Activated CD4-positive, alpha-beta T cell treated with anti-CD3 and anti-CD28 coated beads for 36 hours (primary cell): ENCODE measurements at regions of chr12 and their contacts with region 1.

Region 1: DNA sequence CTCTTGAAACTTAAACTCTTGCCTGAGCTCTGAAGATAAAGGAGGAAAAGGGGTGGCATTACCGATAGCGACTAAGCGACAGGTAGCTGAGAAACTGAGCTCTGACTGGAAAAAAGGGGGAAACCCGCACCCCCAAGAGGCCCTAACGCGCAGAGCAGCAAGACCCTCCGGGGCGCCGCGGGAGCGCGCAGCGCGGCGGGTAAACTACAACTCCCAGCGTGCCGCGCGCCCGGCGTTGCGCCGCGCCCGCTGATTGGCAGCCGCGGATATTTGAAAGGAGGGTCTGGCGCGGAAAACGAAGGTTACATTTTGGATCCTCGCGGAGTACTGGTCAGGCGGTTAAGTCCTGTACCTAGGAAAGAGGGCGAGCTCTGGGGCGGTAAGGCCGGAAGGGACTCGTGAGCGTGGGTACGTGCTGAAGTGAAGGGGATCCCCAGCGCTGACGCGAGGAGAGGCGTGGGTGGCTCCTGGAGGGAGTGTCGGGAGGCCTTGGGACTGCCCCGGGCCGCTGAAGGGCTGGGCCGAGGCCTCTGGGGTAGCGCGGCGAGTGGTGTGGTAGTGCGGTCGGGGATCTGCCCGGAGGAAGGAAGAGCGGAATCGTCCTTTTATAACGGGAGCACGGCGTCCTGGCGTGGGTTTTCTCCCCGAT is at the start of gene ESPL1:
- DNase-seq: peak; percentile 93
- ATAC-seq: peak; percentile 86
- H3K4me3 Mint-ChIP-seq: peak within 1 kb of the TSS; percentile 92
- H3K27ac Mint-ChIP-seq: peak within 1 kb of the TSS; percentile 98
- H3K4me1 Mint-ChIP-seq: peaks cover 30% of the 10 kb centered on the region
- H3K27me3 Mint-ChIP-seq: no peaks in the 10 kb centered on the region
- total RNA-seq, gene ESPL1: 60.8 to 66.9 TPM

Region 2: GRCh38 chr12:53014709-53015108 is 253.4 kb before region 1 on chr12:
- CTCF ChIA-PET with region 1: no interaction called
- POLR2A ChIA-PET with region 1: no interaction called
- intact Hi-C with region 1: no loop called
- DNase-seq: no peak
- ATAC-seq: peak; percentile 69
- H3K4me3 Mint-ChIP-seq: no peak overlapping the region
- H3K27ac Mint-ChIP-seq: peak overlapping the region; percentile 63
- H3K4me1 Mint-ChIP-seq: peaks cover 45% of the 10 kb centered on the region
- H3K27me3 Mint-ChIP-seq: no peaks in the 10 kb centered on the region

Region 3: DNA sequence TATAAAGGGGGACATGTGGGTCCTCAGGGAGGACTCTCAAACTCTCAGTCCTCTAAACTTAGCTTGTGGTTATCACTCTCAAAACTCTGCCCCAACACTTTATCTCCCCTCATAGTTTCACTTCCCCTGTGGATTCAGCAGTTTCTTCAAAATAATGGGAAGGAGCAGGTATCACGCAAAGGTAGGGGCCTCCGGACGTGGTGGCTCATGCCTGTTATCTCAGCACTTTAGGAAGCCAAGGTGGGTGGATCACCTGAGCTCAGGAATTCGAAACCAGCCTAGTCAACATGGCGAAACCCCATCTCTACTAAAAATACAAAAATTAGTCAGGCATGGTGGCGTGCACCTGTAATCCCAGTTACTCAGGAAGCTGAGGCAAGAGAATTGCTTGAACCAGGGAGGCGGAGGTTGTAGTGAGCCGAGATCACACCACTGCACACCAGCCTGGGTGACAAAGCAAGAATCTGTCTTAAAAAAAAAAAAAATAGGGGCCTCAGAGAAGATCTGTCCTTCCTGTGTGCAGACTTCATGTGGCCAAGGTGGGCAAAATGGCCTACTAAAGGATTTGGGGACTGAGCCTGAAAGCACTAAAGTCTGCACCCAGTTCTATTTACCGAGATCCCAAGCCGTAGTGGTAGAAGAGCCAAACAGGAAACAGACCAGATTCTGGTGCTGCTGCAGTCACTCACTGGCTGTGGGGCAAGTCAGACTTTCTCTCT is 67.5 kb before region 1 on chr12:
- CTCF ChIA-PET with region 1: interaction called, 21 read pairs
- POLR2A ChIA-PET with region 1: interaction called, 7 read pairs
- intact Hi-C with region 1: no loop called
- DNase-seq: peak; percentile 68
- ATAC-seq: peak; percentile 52
- H3K4me3 Mint-ChIP-seq: peak overlapping the region; percentile 44
- H3K27ac Mint-ChIP-seq: peak overlapping the region; percentile 90
- H3K4me1 Mint-ChIP-seq: peaks cover 74% of the 10 kb centered on the region
- H3K27me3 Mint-ChIP-seq: no peaks in the 10 kb centered on the region

Region 4: DNA sequence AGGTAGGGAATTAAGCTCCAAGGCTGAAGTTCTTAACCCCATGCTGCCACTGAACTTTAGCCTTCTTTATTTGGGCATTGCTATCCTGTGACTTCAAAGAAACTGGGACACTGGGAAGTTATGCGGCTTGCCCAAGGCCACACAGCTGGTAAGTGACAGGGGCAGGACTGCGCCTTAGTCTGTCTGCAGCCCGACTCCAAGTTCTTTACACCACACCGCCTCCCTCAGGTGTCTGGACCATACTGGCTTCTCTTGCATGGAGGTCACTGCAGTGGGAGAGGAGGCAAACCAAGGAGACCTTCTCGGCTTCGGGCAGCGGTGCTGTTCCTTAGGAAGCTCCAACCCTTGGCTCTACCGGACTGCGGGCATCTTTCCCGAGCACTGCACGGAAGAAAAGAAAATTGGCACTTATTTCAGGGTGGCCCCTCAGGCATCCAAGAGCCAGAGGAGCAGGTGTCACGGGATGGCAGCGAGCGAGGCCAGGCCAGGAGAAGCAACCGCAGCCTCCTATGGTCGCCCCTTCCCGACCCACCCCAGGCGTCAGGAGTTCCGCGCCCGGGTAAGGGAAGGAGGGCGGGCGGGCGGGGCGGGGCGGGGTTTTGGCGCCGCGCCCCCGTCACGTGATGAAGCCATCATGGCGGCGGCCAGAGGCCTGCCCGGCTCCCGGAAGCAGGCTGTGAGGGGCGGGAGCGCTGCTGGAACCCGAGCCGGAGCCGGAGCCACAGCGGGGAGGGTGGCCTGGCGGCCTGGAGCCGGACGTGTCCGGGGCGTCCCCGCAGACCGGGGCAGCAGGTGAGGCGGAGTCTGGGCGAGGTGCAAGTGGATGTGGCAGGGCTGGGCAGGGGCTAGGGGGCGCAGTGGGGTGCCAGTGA is 16.4 kb before region 1 on chr12:
- CTCF ChIA-PET with region 1: interaction called, 14 read pairs
- POLR2A ChIA-PET with region 1: interaction called, 14 read pairs
- intact Hi-C with region 1: loop called in 1 of 2 experiments (anchors 1 kb)
- DNase-seq: peak; percentile 83
- ATAC-seq: peak; percentile 91
- H3K4me3 Mint-ChIP-seq: peak overlapping the region; percentile 97
- H3K27ac Mint-ChIP-seq: peak overlapping the region; percentile 95
- H3K4me1 Mint-ChIP-seq: peaks cover 36% of the 10 kb centered on the region
- H3K27me3 Mint-ChIP-seq: no peaks in the 10 kb centered on the region

Region 5: GRCh38 chr12:53344824-53345485 is 76.8 kb after region 1 on chr12:
- CTCF ChIA-PET with region 1: interaction called, 10 read pairs
- POLR2A ChIA-PET with region 1: no interaction called
- intact Hi-C with region 1: no loop called
- DNase-seq: peak; percentile 88
- ATAC-seq: peak; percentile 85
- H3K4me3 Mint-ChIP-seq: peak overlapping the region; percentile 83
- H3K27ac Mint-ChIP-seq: peak overlapping the region; percentile 90
- H3K4me1 Mint-ChIP-seq: peaks cover 24% of the 10 kb centered on the region
- H3K27me3 Mint-ChIP-seq: peaks cover 2% of the 10 kb centered on the region

Region 6: DNA sequence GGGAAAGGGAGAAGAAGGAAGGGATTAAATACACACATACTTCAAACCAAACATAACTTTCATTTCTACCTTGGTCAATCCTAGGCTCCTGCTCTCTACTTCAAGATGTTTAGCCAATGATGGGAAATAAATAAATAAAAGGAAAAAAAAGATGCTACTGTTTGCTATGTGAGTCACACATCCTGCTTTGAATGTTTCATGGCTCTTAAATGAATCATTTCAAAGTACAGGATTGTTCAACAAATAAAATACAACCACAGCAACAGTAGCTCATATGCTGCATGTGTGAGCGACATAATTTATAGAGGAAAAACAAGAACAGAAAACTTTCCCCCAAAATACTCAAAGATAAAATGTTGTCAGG is 293.4 kb after region 1 on chr12:
- CTCF ChIA-PET with region 1: no interaction called
- POLR2A ChIA-PET with region 1: no interaction called
- intact Hi-C with region 1: no loop called
- DNase-seq: no peak
- ATAC-seq: peak; percentile 93
- H3K4me3 Mint-ChIP-seq: no peak overlapping the region
- H3K27ac Mint-ChIP-seq: peak overlapping the region; percentile 76
- H3K4me1 Mint-ChIP-seq: peaks cover 63% of the 10 kb centered on the region
- H3K27me3 Mint-ChIP-seq: no peaks in the 10 kb centered on the region